ENCODE measurements at regions of chr2 and their contacts with region 1.

Region 1: DNA sequence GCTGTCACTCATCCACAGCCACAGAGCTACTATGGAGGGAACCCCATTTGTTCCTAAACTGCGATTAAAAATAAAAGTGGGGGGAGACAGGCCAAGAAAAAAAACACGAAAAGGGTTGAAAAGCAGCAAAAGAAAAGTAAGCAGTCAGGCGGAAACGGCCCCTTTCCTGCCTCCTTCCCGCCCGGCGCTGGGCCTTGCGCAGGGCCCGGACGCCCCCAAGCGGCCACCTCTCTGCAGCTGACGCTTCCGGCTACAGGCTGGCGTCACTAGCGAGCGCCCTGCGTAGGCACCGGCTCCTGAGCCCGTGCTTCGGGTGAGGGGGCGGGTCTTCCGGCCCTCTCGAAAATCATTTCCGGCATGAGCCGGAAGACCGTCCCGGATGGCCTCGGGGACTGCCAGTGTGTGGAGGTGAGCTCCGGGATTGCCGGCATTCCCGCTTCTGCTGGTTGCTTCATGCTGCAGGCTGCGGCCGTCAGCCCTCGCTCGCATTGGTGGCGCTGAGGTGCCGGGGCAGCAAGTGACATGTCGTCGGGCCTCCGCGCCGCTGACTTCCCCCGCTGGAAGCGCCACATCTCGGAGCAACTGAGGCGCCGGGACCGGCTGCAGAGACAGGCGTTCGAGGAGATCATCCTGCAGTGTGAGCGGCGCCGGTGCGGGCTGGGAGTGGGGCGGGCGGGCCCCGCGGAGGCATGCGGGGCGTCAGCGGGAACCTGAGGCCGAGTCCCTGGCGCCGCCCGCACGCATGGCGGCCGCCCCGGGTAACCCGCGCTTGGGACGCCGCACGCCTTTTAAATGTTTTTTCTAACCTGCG is at the start of gene ATG16L1:
- DNase-seq: peak; percentile 98
- ATAC-seq: peak; percentile 100
- total RNA-seq, gene ATG16L1: 18.4 TPM

Region 2: DNA sequence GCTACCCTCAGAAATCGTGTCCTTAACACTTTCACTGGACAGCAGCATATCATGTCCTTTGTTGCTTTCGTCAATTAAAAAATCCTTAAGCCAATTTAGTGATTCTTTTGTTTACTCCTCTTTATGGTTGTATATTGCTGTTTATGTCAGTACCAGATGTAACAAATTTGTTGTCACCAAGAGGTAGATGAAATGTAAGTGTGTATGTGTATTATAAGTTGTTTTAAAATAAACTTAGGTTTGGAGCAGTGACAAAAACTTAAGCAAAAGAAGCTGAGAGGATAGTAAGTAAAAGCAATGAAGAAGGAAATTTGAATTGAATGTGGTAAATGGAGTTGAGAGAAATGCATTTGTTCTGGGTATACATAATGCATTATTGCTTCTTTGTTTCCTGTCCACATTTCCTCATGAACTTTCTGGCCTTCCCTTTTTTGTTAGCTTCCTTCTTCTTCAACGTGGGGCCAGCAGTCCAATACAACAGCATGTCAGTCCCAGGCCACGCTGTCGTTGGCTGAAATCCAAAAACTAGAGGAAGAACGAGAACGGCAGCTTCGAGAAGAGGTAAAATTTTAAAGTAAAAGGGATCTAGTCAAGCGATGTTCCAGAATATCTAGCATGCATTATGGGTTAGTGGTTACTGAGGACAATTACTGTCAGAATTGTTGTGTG is 412.0 kb before region 1 on chr2:
- intact Hi-C with region 1: loop called (anchors 10 kb)
- DNase-seq: peak; percentile 31
- ATAC-seq: peak; percentile 34

Region 3: DNA sequence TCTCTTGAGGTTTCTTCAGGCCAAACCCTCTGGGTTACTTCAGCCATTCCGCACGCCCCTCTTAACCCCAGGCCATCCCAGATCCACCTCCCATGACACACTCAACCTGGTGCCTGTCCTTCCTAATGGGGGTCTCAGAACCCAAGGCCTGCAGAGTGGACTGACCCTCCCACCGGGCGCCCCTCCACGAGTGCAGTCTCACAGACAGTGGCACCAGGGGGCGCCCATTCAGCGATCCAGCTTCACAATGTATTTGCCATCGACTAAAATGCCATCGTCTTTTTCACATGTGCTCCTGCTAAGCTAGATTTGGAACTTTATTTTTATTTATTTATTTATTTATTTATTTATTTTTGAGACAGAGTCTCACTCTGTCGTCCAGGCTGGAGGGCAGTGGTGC is 152.9 kb before region 1 on chr2:
- intact Hi-C with region 1: loop called (anchors 10 kb)
- DNase-seq: peak; percentile 57
- ATAC-seq: peak; percentile 53

Region 4: GRCh38 chr2:233426619-233427342 is 175.3 kb after region 1 on chr2:
- intact Hi-C with region 1: no loop called
- DNase-seq: no peak
- ATAC-seq: no peak

Measured in left ventricle myocardium superior (tissue), 1 donor.